H1 (cell line): ENCODE measurements at regions of chr1 and their contacts with region 1.

Region 1: DNA sequence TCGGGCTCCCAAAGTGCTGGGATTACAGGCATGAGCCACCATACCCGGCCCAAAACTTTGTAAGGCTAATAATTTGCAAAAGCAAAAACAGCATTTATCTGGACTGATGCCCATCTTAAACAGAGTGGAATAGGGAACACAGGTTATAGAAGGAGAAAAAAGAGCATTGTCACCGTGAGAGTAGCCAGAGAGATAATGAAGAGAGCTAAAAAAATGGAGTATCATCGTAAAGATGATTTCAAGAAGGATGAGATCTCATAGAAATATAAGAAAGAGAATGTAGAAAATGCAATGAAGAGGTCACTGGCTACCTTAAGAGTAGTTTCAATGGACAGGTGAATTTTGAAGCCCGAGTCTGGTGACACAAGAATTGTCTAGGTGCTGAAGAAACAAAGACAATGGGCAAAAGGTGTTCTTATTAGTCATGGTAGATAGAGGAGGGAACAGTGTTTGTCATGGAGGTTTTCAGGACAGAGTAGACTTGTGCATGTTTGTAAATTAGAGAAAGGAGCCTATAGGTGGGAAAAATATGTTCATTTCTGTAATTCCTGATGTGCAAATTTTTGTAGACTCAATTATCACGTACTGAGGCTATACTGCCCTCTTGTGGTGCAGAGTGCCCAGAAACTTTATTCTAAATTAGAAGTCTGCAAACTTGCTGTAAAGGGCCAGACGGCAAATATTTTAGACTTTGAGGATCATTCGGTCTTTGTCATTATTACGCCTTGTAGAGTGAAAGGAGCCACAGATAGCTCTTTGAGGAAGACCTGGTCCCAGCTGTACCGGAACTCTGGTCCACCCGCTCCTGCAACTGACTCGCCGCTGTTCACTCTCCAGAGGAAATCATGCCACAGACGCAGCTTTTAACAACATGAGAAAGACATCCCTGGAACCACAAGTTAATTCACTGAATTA is 8.1 kb upstream of the TMEM183A start:
- DNase-seq: peak in 1 of 2 experiments; percentile 71
- H3K4me3 ChIP-seq: 0 out of 8 replicates have a peak overlapping the region, but pooled peaks of 1 of the 4 experiments have one; percentile 11
- H3K27ac ChIP-seq: no peak overlapping the region
- H3K4me1 ChIP-seq: 0 out of 7 replicates have a peak, but pooled peaks cover 0 to 2% (median 0%) of the 10 kb centered on the region in 4 experiments
- H3K27me3 ChIP-seq: no peaks in the 10 kb centered on the region
- CTCF ChIP-seq: peak in 2 of 3 experiments; percentile 56 to 67; a peak in 3 of 4 replicates
- EP300 ChIP-seq: no peak
- POLR2A ChIP-seq: no peak
- RAD21 ChIP-seq: peak; percentile 82 to 84

Region 2: DNA sequence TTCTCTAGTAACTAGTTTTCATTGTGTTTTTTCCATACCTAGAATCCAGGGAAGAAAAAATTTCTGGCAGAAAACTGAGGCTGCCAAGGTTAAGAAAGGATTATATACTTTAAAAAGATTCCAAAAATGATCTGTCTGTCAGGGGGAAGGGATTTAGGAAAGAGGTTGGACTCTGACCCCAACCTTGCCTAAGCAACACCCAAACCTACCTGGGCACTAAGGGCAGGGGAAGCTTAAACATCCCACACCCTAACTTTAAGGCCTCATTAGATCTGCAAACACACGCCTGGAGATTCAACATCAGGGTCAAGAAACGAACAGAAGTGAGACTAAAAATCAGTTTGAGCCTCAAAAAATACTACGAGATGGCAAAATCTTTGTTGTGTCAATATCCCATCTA is 210.3 kb before region 1 on chr1:
- CTCF ChIA-PET with region 1: no interaction called
- POLR2A ChIA-PET with region 1: no interaction called
- DNase-seq: no peak
- H3K4me3 ChIP-seq: no peak overlapping the region
- H3K27ac ChIP-seq: no peak overlapping the region
- H3K4me1 ChIP-seq: no peaks in the 10 kb centered on the region
- H3K27me3 ChIP-seq: no peaks in the 10 kb centered on the region
- CTCF ChIP-seq: no peak
- EP300 ChIP-seq: no peak
- POLR2A ChIP-seq: no peak
- RAD21 ChIP-seq: no peak

Region 3: DNA sequence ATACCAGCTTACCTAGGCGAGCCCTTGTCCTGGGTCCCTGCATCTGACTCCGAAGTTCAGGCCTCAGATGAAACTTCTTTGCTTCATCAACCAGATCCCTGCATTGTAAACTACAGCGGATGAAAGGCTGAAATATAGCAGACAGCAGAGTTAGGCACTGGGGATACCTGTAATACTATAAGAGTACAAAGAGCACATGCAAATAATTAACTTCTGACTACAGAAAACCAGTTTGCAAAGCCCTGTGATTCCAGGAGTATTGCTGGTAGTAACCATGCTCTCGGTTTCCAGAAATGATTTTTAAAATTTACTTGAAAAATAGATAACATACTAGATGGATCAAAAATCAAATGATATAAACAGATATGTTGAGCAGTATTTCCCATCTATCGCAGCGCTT is 90.1 kb before region 1 on chr1:
- CTCF ChIA-PET with region 1: no interaction called
- POLR2A ChIA-PET with region 1: no interaction called
- DNase-seq: no peak
- H3K4me3 ChIP-seq: no peak overlapping the region
- H3K27ac ChIP-seq: no peak overlapping the region
- H3K4me1 ChIP-seq: no peaks in the 10 kb centered on the region
- H3K27me3 ChIP-seq: no peaks in the 10 kb centered on the region
- CTCF ChIP-seq: no peak
- EP300 ChIP-seq: no peak
- POLR2A ChIP-seq: no peak
- RAD21 ChIP-seq: no peak

Region 4: GRCh38 chr1:202958544-202959275 is 40.4 kb before region 1 on chr1:
- CTCF ChIA-PET with region 1: interaction called, 10 read pairs
- POLR2A ChIA-PET with region 1: no interaction called
- DNase-seq: no peak
- H3K4me3 ChIP-seq: peak overlapping the region; percentile 80 to 99 (median 84)
- H3K27ac ChIP-seq: no peak overlapping the region
- H3K4me1 ChIP-seq: peaks cover 0 to 3% (median 0%) of the 10 kb centered on the region in 4 experiments; a peak in 1 of 7 replicates
- H3K27me3 ChIP-seq: no peaks in the 10 kb centered on the region
- CTCF ChIP-seq: no peak
- EP300 ChIP-seq: no peak
- POLR2A ChIP-seq: no peak
- RAD21 ChIP-seq: no peak

Region 5: DNA sequence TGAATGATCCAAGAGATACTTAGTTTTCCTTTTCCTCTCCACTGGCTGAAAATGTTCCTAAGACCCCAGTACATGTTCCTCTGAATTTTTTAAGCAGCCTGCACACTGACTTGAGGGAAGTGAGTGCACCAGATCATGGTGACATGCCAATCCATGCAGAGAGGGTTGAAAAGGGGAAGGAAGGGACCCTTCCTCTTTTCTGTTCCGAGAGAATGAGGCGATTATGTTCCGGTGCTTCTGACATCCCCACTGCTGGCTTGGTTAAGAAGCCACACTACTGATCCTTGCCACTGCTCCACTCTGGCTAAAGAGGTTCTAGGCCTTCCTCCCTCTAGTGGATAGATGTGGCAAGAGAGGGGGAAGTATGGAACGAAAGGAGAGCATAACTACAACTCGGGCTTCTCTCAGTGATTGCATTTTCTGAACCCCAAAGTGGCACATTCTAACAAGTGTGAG is 30.2 kb before region 1 on chr1:
- CTCF ChIA-PET with region 1: interaction called, 11 read pairs
- POLR2A ChIA-PET with region 1: interaction called, 6 read pairs
- DNase-seq: peak in 1 of 2 experiments; percentile 49
- H3K4me3 ChIP-seq: no peak overlapping the region
- H3K27ac ChIP-seq: no peak overlapping the region
- H3K4me1 ChIP-seq: peaks cover 4 to 6% (median 5%) of the 10 kb centered on the region in 4 experiments; a peak in 6 of 7 replicates
- H3K27me3 ChIP-seq: no peaks in the 10 kb centered on the region; a peak in 2 of 7 replicates
- CTCF ChIP-seq: peak in 2 of 3 experiments; percentile 87 to 88; a peak in 3 of 4 replicates
- EP300 ChIP-seq: no peak
- POLR2A ChIP-seq: no peak
- RAD21 ChIP-seq: peak; percentile 47 to 52

Region 6: DNA sequence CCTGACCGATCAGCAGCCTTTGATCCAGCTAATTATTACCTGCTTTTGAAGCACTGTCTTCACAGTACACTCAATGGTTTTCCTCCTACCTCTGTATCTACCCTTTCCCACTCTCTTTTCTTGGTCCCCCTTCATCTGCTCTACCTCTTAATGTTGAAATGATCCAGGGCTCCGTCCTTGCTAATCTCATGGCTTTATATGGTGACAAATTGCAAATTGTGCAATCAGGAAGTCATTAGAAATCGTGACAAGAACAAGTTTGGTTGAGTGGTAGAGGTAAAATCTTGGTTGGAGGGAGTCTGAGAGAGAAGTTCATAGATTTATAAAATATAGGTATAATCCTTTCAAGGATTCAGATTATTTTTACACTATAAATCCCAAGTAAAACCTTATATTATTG is 22.5 kb before region 1 on chr1:
- CTCF ChIA-PET with region 1: interaction called, 15 read pairs
- POLR2A ChIA-PET with region 1: no interaction called
- DNase-seq: no peak
- H3K4me3 ChIP-seq: no peak overlapping the region
- H3K27ac ChIP-seq: no peak overlapping the region
- H3K4me1 ChIP-seq: no peaks in the 10 kb centered on the region; a peak in 1 of 7 replicates
- H3K27me3 ChIP-seq: no peaks in the 10 kb centered on the region
- CTCF ChIP-seq: no peak
- EP300 ChIP-seq: no peak
- POLR2A ChIP-seq: no peak
- RAD21 ChIP-seq: no peak

Region 7: DNA sequence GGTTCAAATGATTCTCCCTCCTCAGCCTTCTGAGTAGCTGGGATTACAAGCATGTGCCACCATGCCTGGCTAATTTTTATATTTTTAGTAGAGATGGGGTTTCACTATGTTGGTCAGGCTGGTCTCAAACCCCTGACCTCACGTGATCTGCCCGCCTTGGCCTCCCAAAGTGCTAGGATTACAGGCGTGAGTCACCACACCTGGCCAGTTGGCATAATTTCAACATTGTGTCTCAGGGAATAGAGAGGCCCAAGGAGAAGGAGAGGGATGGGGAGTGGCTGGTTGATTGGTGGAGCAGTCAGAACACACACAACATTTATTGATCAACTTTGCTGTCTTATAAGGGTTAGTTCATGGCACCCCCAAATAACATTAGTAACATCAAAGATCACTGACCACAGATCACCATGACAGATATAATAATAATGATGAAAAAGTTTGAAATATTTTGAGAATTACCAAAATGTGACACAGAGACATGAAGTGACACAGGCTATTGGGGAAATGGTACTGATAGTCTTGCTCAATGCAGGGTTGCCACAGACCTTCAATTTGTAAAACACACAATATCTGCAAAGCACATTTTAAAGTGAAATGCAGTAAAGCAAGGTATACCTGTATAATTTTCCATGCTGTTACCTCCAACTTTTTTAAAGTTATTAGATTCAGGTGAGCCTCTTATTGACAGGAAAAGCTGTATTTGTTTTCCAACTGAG is 16.2 kb before region 1 on chr1:
- CTCF ChIA-PET with region 1: interaction called, 43 read pairs
- POLR2A ChIA-PET with region 1: interaction called, 3 read pairs
- DNase-seq: no peak
- H3K4me3 ChIP-seq: no peak overlapping the region
- H3K27ac ChIP-seq: no peak overlapping the region
- H3K4me1 ChIP-seq: no peaks in the 10 kb centered on the region; a peak in 1 of 7 replicates
- H3K27me3 ChIP-seq: no peaks in the 10 kb centered on the region
- CTCF ChIP-seq: no peak
- EP300 ChIP-seq: no peak
- POLR2A ChIP-seq: no peak
- RAD21 ChIP-seq: no peak

Region 8: DNA sequence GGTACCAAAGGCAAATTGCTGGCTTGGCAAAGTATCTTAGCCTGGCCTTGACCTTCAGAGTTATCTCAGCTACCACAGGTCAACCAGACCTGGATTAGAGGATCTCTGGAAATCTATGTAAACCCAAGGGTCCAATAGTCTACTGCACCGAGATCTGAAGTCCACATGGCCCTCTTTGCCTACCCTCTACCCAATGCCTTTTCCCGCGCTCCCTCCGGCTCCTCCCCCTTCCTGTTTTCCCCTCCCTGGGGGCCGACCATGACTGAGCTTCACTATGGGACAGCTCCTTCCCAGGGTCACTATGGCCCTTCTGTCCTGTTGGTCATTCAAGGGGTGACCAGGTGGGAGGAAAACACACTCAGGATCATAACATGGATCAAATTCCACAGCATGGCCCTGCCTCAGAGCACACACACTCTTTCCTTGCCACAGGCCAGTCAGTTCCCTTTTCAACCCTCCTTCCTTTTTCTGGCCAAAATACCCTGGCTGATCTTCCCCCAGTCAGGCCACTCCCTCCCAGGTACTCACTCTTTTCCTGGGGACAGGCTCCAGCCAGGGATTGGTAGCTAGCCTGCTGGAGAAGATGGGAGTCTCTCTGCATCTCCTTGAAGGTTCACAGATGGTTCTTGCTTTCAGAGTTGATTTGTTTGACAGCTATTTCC is 11.0 kb before region 1 on chr1:
- CTCF ChIA-PET with region 1: interaction called, 43 read pairs
- POLR2A ChIA-PET with region 1: interaction called, 3 read pairs
- DNase-seq: no peak
- H3K4me3 ChIP-seq: no peak overlapping the region
- H3K27ac ChIP-seq: no peak overlapping the region
- H3K4me1 ChIP-seq: no peaks in the 10 kb centered on the region
- H3K27me3 ChIP-seq: no peaks in the 10 kb centered on the region
- CTCF ChIP-seq: no peak
- EP300 ChIP-seq: no peak
- POLR2A ChIP-seq: no peak
- RAD21 ChIP-seq: no peak

Region 9: DNA sequence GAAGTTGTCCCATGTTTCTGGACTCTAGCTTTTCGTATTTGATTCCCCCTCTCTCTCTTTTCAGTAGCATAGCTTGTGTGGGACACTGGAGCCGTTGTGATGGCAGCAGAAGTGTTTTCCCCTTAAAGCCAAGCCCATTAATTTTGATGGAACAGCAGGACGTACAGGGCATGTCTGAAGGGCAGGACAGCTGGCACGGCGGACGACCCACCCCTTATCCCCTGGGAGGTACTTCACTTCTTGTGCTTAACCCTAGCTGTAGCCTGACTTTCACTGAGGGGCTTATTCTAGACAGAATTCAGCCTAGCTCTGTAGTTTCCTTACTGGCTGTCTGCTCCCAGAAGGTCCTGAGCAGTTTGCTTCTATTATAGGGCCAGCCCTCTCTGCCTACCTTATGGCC is 18.6 kb after region 1 on chr1:
- CTCF ChIA-PET with region 1: interaction called, 11 read pairs
- POLR2A ChIA-PET with region 1: interaction called, 3 read pairs
- DNase-seq: no peak
- H3K4me3 ChIP-seq: no peak overlapping the region
- H3K27ac ChIP-seq: no peak overlapping the region
- H3K4me1 ChIP-seq: no peaks in the 10 kb centered on the region
- H3K27me3 ChIP-seq: no peaks in the 10 kb centered on the region
- CTCF ChIP-seq: no peak
- EP300 ChIP-seq: no peak
- POLR2A ChIP-seq: no peak
- RAD21 ChIP-seq: no peak

Region 10: DNA sequence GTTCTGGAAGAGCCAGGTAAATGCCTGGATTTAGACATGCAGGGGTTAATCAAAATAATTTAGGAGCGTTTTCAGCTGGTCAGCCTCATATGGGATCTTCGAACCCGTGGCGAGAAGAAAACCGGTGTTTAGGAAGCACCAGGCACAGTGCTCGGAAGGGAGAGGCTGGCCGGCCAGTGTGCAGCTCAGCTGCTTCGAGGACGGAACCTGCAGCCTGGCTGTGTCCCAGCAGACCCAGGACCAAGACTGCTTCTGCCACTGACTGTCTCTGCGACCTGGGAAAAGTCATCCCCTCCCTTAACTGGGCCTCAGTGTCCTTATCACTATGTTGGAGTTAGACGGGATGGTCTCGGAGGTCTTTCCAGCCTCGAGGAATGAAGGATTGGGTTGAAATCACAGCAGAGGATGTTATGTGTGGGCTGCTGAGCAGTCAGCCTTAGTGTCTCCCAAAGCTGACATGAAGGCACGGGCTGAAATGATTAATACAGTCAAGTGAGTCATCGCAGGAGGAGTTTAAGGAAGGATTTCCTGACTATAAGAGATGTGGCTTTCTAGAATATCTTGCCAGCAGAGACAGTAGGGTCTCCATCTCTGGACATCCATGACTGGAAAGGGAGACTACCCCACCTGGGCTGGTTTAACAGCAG is 48.0 kb after region 1 on chr1:
- CTCF ChIA-PET with region 1: no interaction called
- POLR2A ChIA-PET with region 1: no interaction called
- DNase-seq: no peak
- H3K4me3 ChIP-seq: no peak overlapping the region
- H3K27ac ChIP-seq: no peak overlapping the region
- H3K4me1 ChIP-seq: peaks cover 0 to 20% (median 5%) of the 10 kb centered on the region in 4 experiments; a peak in 6 of 7 replicates
- H3K27me3 ChIP-seq: no peaks in the 10 kb centered on the region
- CTCF ChIP-seq: no peak
- EP300 ChIP-seq: no peak
- POLR2A ChIP-seq: no peak
- RAD21 ChIP-seq: no peak